Mammary epithelial cell (primary cell): ENCODE measurements at regions of chr22 and their contacts with region 1.

Region 1: DNA sequence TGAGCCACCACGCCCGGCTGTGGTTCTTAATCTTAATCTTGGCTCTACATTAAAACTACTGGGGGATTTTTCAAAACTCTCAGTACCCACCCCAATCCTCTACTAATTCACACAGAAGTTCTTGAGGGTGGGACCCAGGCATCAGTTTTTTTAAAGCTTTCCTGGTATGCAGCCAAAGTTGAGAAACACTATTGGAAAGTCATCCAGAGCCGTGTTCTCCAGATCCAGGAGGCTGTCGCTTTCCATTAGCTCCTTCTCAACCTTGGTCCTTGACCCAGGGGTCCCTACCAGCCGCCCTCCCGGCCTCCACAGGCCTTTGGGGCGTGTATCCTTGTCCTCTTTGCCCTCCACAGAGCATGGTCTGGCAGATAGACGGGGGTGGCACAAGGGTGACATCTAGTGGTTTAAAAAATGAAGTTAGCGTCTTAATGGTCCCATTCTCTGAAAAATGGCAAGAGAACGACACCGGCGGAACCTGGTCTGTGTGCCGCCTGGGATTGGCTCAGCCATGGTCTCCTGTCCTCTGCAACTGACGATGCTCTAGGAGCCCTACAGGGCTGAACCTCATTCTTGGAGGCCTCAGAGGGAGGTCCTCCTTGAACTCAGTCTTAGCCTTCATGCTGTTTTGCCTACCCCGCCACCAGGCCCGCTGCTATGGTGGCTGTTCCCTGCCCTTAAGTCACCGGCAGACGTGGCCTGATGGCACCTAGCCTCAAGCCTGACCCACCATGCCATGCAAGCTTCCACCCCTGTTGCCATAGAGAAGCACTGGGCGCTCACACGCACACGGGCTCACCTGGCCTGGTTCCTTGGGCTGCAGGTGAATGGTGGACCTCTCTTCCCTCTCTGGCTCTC is 152.0 kb upstream of the SYN3 start:
- DNase-seq: peak; percentile 24
- H3K4me3 ChIP-seq: no peak overlapping the region
- H3K27ac ChIP-seq: no peak overlapping the region
- H3K4me1 ChIP-seq: no peaks in the 10 kb centered on the region
- H3K27me3 ChIP-seq: peaks cover 2% of the 10 kb centered on the region
- CTCF ChIP-seq: peak; percentile 63 to 75

Region 2: DNA sequence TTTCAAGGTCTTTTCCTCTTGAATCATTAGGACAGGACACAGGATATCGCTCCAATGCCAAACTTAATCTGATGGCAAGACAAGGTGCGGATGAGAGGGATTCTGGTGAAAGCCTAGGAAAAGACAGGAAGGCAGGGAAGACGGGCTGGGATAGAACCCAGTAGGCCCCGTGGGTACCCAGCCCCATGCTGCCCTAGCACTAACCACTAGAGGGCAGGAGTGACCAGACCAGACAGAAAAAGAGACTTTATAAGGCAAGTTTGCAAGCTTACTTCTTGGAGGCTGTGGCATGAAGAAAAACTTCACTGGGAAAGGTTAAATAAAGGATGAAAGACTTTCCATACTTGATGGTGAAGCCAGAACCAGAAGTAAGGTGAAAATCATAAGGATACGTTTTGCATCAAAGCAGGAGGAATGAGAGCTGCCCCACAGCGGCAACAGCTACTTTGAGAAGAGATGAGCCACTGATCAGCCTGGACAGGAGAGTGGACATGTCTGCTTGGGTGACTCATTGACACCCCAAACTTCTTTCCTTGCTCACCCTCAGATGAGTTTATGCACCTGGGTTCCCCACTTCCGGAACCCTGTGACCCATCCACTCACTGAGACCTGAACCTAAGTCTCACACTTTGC is 191.8 kb before region 1 on chr22:
- CTCF ChIA-PET with region 1: no interaction called
- dilution Hi-C with region 1: no loop called
- in situ Hi-C with region 1: loop called in 1 of 2 experiments (anchors 5 kb)
- intact Hi-C with region 1: no loop called
- DNase-seq: no peak
- H3K4me3 ChIP-seq: no peak overlapping the region
- H3K27ac ChIP-seq: no peak overlapping the region
- H3K4me1 ChIP-seq: no peaks in the 10 kb centered on the region
- H3K27me3 ChIP-seq: no peaks in the 10 kb centered on the region
- CTCF ChIP-seq: peak; percentile 93 to 95

Region 3: DNA sequence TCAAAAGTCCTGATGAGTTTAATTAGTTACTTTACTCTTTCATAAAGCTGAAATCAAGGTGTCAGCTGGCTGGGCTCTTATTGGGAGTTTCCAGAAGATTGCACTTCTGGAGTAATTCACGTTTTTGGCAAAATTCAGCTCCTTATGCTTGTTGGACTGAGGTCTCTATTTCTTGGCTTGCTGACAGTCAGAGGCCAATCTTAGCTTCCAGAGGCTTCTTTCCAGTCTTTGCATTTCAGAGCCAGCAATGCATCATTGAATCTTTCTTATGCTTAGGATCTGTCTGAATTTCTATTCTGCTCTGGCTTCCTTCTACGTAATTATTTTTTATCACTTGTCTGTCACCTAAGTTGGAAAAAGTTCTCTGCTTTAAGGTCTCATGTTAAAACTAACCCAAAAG is 60.5 kb before region 1 on chr22:
- CTCF ChIA-PET with region 1: no interaction called
- dilution Hi-C with region 1: loop called (anchors 5 kb)
- in situ Hi-C with region 1: no loop called
- intact Hi-C with region 1: no loop called
- DNase-seq: no peak
- H3K4me3 ChIP-seq: no peak overlapping the region
- H3K27ac ChIP-seq: no peak overlapping the region
- H3K4me1 ChIP-seq: no peaks in the 10 kb centered on the region
- H3K27me3 ChIP-seq: no peaks in the 10 kb centered on the region
- CTCF ChIP-seq: no peak